Activated CD4-positive, alpha-beta T cell treated with anti-CD3 and anti-CD28 coated beads for 36 hours (primary cell): ENCODE measurements at regions of chr10 and their contacts with region 1.

Region 1: DNA sequence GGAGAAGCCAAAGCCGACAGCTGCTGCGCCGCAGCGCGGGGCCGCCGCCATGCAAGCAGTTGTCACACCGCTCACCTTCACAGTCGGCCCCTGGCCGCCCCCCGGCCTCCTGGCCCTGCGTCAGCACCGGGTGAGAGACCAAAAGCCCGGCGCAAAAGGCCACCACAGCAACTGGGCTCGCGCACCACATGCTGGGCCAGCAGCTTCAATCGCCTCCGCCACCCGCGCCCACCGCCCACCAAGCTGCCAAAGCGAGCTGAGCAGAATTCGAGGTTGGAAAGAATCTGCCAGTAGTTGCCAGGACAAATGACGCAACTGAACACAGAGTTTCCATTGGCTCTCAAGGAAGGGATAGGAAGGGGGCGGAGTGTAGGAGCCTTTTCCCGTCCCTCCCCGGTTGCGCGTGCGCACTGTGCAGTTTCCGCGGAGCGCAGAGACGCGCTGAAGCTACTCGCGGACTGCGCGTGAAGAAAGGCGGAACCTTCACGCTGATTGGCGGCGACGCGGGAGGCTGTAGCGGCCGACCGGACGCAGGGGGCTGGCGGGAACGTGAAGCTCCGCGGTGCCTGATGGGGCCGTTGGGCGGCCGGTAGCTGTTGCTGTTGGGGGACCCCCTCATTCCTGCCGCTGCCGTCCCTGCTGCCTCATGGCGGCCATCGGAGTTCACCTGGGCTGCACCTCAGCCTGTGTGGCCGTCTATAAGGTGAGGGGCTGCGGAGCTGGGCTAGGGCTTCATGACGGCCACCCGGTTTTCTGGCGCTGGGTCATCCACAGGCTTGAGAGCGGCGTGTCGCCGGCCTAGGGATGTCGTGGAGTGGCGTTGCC is at the starts of genes CDNF, HSPA14 and MSANTD7:
- DNase-seq: peak; percentile 100
- ATAC-seq: peak; percentile 97
- H3K4me3 Mint-ChIP-seq: peak within 1 kb of the TSS; percentile 89
- H3K27ac Mint-ChIP-seq: peak within 1 kb of the TSS; percentile 94
- H3K4me1 Mint-ChIP-seq: peaks cover 18% of the 10 kb centered on the region
- H3K27me3 Mint-ChIP-seq: no peaks in the 10 kb centered on the region
- total RNA-seq, gene CDNF: 2.5 to 2.7 TPM
- total RNA-seq, gene HSPA14: 26.1 to 36.0 TPM
- total RNA-seq, gene MSANTD7: 19.2 to 22.9 TPM

Region 2: GRCh38 chr10:13586676-13587355 is 1251.2 kb before region 1 on chr10 and contains the start of gene PRPF18:
- CTCF ChIA-PET with region 1: no interaction called
- POLR2A ChIA-PET with region 1: no interaction called
- intact Hi-C with region 1: loop called in 1 of 2 experiments (anchors 10 kb)
- DNase-seq: peak; percentile 97
- ATAC-seq: peak; percentile 100
- H3K4me3 Mint-ChIP-seq: peak within 1 kb of the TSS; percentile 99
- H3K27ac Mint-ChIP-seq: peak within 1 kb of the TSS; percentile 95
- H3K4me1 Mint-ChIP-seq: peaks cover 29% of the 10 kb centered on the region
- H3K27me3 Mint-ChIP-seq: peaks cover 8% of the 10 kb centered on the region
- total RNA-seq, gene PRPF18: 21.0 to 22.1 TPM

Region 3: GRCh38 chr10:14499601-14499904 is 338.4 kb before region 1 on chr10:
- CTCF ChIA-PET with region 1: interaction called, 3 read pairs
- POLR2A ChIA-PET with region 1: no interaction called
- intact Hi-C with region 1: loop called (anchors 1 to 2 kb)
- DNase-seq: no peak
- ATAC-seq: no peak
- H3K4me3 Mint-ChIP-seq: no peak overlapping the region
- H3K27ac Mint-ChIP-seq: no peak overlapping the region
- H3K4me1 Mint-ChIP-seq: peaks cover 14% of the 10 kb centered on the region
- H3K27me3 Mint-ChIP-seq: no peaks in the 10 kb centered on the region

Region 4: GRCh38 chr10:14588084-14588937 is 249.7 kb before region 1 on chr10:
- CTCF ChIA-PET with region 1: interaction called, 8 read pairs
- POLR2A ChIA-PET with region 1: interaction called, 3 read pairs
- intact Hi-C with region 1: loop called (anchors 1 kb)
- DNase-seq: peak; percentile 77
- ATAC-seq: peak; percentile 70
- H3K4me3 Mint-ChIP-seq: peak overlapping the region; percentile 40
- H3K27ac Mint-ChIP-seq: peak overlapping the region; percentile 89
- H3K4me1 Mint-ChIP-seq: peaks cover 93% of the 10 kb centered on the region
- H3K27me3 Mint-ChIP-seq: no peaks in the 10 kb centered on the region

Region 5: DNA sequence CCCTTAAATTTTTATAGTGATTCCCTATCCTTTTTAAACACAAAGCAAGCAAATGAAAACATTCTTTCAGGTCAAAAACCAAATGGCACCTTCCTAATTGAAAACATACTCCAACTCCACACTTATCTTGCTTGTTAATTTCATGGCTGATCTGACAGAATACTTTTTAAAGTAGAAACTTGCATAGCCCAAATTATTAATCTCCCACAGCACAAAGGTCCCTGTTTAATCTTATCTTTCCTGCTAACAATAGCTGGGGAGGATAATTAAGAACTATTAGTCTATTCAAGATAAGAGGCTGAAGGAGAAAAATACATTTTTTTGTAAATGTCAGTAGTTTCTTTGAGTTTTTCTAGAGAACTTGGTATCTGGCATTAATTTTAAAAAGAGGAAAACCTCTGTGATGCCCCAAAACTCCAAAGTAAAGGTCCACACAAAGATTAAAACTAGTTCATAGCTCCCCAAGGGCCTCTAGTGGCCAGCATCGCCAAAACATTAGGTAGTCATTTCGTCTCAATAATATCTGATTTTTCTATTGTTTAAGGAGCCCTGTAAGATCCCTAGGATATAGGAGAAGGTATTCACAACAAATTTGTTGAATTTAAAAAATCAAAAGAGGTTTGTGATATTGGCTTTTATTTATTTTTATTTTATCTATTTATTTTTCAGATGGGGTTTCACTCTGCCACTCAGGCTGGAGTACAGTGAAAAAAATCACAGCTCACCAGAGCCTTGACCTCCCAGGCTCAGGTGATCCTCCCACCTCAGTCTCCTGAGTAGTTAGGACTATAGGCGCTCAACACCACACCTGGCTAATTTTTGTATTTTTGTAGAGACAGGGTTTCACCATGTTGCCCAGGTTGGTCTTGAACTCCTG is 14.9 kb before region 1 on chr10:
- CTCF ChIA-PET with region 1: interaction called, 12 read pairs
- POLR2A ChIA-PET with region 1: no interaction called
- intact Hi-C with region 1: no loop called
- DNase-seq: peak; percentile 64
- ATAC-seq: peak; percentile 64
- H3K4me3 Mint-ChIP-seq: no peak overlapping the region
- H3K27ac Mint-ChIP-seq: peak overlapping the region; percentile 65
- H3K4me1 Mint-ChIP-seq: peaks cover 6% of the 10 kb centered on the region
- H3K27me3 Mint-ChIP-seq: no peaks in the 10 kb centered on the region

Region 6: GRCh38 chr10:14959276-14960057 is 121.5 kb after region 1 on chr10 and contains the start of gene MEIG1:
- CTCF ChIA-PET with region 1: interaction called, 6 read pairs
- POLR2A ChIA-PET with region 1: interaction called, 6 read pairs
- intact Hi-C with region 1: loop called (anchors 1 kb)
- DNase-seq: peak; percentile 96
- ATAC-seq: peak; percentile 87
- H3K4me3 Mint-ChIP-seq: peak within 1 kb of the TSS; percentile 97
- H3K27ac Mint-ChIP-seq: peak within 1 kb of the TSS; percentile 98
- H3K4me1 Mint-ChIP-seq: peaks cover 26% of the 10 kb centered on the region
- H3K27me3 Mint-ChIP-seq: no peaks in the 10 kb centered on the region
- total RNA-seq, gene MEIG1: 0.81 to 1.1 TPM